ENCODE measurements at regions of chr1 and their contacts with region 1.

Region 1: GRCh38 chr1:91803847-91804545 is 82.0 kb downstream of the TGFBR3 start:
- DNase-seq: peak; percentile 86
- H3K4me3 Mint-ChIP-seq: peak overlapping the region; percentile 68
- H3K27ac Mint-ChIP-seq: peak overlapping the region; percentile 92
- H3K4me1 Mint-ChIP-seq: peaks cover 40% of the 10 kb centered on the region
- H3K27me3 Mint-ChIP-seq: peaks cover 3% of the 10 kb centered on the region

Region 2: GRCh38 chr1:91124989-91125417 is 679.0 kb before region 1 on chr1:
- CTCF ChIA-PET with region 1: no interaction called
- POLR2A ChIA-PET with region 1: no interaction called
- intact Hi-C with region 1: loop called (anchors 5 kb)
- DNase-seq: peak; percentile 67
- H3K4me3 Mint-ChIP-seq: peak overlapping the region; percentile 24
- H3K27ac Mint-ChIP-seq: peak overlapping the region; percentile 73
- H3K4me1 Mint-ChIP-seq: peaks cover 19% of the 10 kb centered on the region
- H3K27me3 Mint-ChIP-seq: peaks cover 3% of the 10 kb centered on the region

Region 3: GRCh38 chr1:91673613-91674012 is 130.4 kb before region 1 on chr1:
- CTCF ChIA-PET with region 1: no interaction called
- POLR2A ChIA-PET with region 1: no interaction called
- intact Hi-C with region 1: loop called (anchors 1 kb)
- DNase-seq: no peak
- H3K4me3 Mint-ChIP-seq: no peak overlapping the region
- H3K27ac Mint-ChIP-seq: no peak overlapping the region
- H3K4me1 Mint-ChIP-seq: peaks cover 37% of the 10 kb centered on the region
- H3K27me3 Mint-ChIP-seq: no peaks in the 10 kb centered on the region

Region 4: DNA sequence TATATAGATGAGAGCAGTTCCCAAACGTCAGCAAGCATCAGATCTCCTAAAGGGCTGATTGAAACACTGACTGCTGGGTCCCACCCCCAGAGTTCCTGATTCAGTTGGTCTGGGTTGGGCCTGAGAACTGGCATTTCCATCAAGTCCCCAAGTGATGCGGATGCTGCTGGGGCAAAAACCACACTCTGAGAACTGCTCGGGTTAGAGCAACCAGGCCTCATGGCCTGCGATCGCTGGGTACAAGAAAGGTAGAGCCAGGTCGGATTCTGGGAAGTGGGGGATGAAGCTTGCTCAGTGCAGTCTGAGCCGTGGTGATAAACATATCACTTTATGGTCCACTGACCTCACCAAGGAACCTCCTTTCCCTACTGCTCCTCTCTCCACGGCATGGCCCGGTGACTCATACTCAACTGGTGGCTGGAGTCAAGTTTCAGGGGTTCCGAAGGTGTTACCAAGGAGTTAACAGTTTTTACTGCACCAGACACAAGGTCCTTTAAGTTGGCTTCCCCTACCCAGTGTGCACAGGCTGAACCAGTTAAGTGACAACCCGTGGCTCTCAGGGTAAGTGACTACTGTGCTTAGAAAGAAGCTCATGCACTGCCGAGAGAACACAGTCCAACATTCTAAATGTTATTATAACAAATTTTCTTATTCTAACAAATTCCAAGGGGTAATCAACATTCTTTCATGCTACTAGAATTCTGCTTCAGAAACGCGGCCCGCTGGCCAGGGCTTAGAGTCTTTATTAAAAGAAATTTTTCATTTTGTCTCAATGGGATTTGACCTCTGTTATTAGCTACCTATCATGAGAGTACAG is 71.5 kb before region 1 on chr1:
- CTCF ChIA-PET with region 1: interaction called, 3 read pairs
- POLR2A ChIA-PET with region 1: interaction called, 3 read pairs
- intact Hi-C with region 1: loop called (anchors 1 kb)
- DNase-seq: peak; percentile 65
- H3K4me3 Mint-ChIP-seq: peak overlapping the region; percentile 24
- H3K27ac Mint-ChIP-seq: peak overlapping the region; percentile 29
- H3K4me1 Mint-ChIP-seq: peaks cover 50% of the 10 kb centered on the region
- H3K27me3 Mint-ChIP-seq: no peaks in the 10 kb centered on the region

Region 5: DNA sequence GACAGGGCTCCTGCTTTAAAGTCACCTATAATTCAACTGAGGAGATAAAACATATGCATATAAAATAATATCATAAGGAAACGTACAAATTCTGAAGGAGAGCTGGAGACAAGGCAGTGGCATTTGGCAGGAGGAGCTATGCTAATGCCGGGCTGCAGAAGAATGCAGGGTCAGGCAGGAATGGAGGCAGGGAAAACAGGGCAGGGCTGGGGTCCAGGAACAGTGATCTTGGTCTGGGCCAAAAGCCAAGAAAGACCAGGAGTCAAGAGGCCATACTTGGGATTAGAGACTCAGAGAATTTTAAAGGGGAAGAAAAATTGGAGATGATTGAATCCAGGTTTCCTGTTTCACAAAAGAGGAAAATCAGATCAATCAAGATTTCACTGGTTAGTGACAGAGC is 125.3 kb after region 1 on chr1:
- CTCF ChIA-PET with region 1: no interaction called
- POLR2A ChIA-PET with region 1: no interaction called
- intact Hi-C with region 1: loop called (anchors 5 kb)
- DNase-seq: no peak
- H3K4me3 Mint-ChIP-seq: no peak overlapping the region
- H3K27ac Mint-ChIP-seq: no peak overlapping the region
- H3K4me1 Mint-ChIP-seq: peaks cover under 1% of the 10 kb centered on the region
- H3K27me3 Mint-ChIP-seq: no peaks in the 10 kb centered on the region

Region 6: GRCh38 chr1:92583821-92584760 is 780.1 kb after region 1 on chr1:
- CTCF ChIA-PET with region 1: no interaction called
- POLR2A ChIA-PET with region 1: no interaction called
- intact Hi-C with region 1: loop called (anchors 10 kb)
- DNase-seq: no peak
- H3K4me3 Mint-ChIP-seq: peak overlapping the region; percentile 65
- H3K27ac Mint-ChIP-seq: peak overlapping the region; percentile 92
- H3K4me1 Mint-ChIP-seq: peaks cover 64% of the 10 kb centered on the region
- H3K27me3 Mint-ChIP-seq: no peaks in the 10 kb centered on the region